Heart right ventricle (tissue), 16 donors: ENCODE measurements at regions of chr19 and their contacts with region 1.

Region 1: GRCh38 chr19:12864721-12865715 is 16.2 kb downstream of the DNASE2 start:
- DNase-seq: no peak
- ATAC-seq: no peak
- H3K4me3 ChIP-seq: no peak overlapping the region
- H3K27ac ChIP-seq: no peak overlapping the region
- H3K4me1 ChIP-seq: peaks cover 0 to 10% (median 7%) of the 10 kb centered on the region in 9 donors
- H3K27me3 ChIP-seq: peaks cover 0 to 26% (median 17%) of the 10 kb centered on the region in 7 donors
- CTCF ChIP-seq: no peak

Region 2: GRCh38 chr19:12801466-12802266 is 63.4 kb before region 1 on chr19 and contains the starts of genes PRDX2 and THSD8:
- intact Hi-C with region 1: no loop called
- DNase-seq: peak; percentile 76 to 86
- ATAC-seq: peak; percentile 82 to 90 (median 86)
- H3K4me3 ChIP-seq: peak within 1 kb of the TSS; percentile 69 to 97 (median 92)
- H3K27ac ChIP-seq: peak within 1 kb of the TSS; percentile 62 to 95 (median 90)
- H3K4me1 ChIP-seq: peaks cover 3 to 37% (median 26%) of the 10 kb centered on the region in 9 donors
- H3K27me3 ChIP-seq: peaks cover 0 to 12% (median 0%) of the 10 kb centered on the region in 7 donors
- CTCF ChIP-seq: no peak
- total RNA-seq, gene PRDX2: 532 to 789 (median 744) TPM
- total RNA-seq, gene THSD8: 0.72 to 4.8 (median 2.4) TPM

Region 3: DNA sequence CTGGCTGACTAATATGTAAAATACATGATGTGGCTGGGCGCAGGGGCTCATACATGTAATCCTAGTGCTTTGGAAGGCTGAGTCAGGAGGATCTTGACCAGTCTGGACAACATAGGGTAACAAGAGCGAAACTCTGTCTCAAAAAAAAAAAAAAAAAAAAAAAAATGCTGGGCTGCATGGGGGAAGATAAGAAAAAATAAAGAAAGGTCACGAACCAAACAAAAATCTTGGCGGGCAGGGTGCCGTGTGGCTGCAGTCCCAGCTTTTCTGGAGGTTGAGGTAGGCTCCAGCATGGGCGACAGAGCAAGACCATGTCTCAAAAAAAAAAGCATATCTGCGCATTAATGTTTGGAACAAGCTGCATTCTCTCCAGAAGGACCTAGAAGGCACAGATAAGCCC is 49.9 kb before region 1 on chr19:
- intact Hi-C with region 1: loop called in 1 of 10 experiments (anchors 5 kb)
- DNase-seq: no peak
- ATAC-seq: no peak
- H3K4me3 ChIP-seq: no peak overlapping the region
- H3K27ac ChIP-seq: no peak overlapping the region
- H3K4me1 ChIP-seq: no peaks in the 10 kb centered on the region
- H3K27me3 ChIP-seq: no peaks in the 10 kb centered on the region
- CTCF ChIP-seq: no peak